Colonic mucosa (tissue), 4 donors: ENCODE measurements at regions of chr1 and their contacts with region 1.

Region 1: DNA sequence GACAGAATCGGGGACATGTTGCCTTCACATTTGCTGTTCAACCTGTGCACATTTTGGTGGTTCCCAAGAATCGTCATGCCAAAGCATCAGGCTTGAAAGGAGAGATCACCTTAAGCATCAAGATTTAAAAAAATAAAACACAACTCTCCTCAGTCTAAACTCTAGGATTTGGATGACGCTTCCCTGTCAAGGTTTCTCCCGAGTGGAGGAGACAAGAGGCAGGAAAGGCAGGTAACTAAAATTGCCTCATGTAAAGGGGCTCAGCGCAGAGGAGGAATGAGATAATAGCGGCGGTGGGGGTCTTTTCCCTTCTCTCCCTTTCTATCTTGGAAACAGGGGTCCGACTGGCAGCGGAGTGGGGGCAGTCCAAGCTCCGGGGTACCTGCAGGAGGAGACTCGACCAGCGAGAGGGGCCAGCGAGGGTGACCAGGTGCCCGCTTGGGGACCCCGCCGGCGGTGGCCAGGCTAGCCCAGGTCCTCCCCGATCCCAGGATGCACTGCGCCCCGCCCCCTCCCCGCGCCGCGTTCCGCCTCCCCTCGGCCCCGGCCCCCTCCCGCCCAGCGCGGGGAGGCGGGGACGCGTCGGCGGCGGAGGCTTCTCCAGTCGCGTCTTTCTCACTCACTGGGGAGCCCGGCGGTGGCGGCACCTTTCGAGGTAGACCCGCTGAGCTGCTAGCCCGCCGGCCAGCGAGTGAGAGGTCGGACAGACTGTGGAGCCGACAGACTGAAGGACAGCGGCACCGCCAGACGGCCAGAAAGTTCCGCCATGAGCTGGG is at the start of gene FNBP1L:
- DNase-seq: peak; percentile 87
- H3K4me3 ChIP-seq: peak within 1 kb of the TSS; percentile 66
- H3K27ac ChIP-seq: peak within 1 kb of the TSS; percentile 87
- H3K4me1 ChIP-seq: no peaks in the 10 kb centered on the region
- H3K27me3 ChIP-seq: no peaks in the 10 kb centered on the region
- CTCF ChIP-seq: no peak
- total RNA-seq, gene FNBP1L: 48.3 to 54.4 TPM

Region 2: DNA sequence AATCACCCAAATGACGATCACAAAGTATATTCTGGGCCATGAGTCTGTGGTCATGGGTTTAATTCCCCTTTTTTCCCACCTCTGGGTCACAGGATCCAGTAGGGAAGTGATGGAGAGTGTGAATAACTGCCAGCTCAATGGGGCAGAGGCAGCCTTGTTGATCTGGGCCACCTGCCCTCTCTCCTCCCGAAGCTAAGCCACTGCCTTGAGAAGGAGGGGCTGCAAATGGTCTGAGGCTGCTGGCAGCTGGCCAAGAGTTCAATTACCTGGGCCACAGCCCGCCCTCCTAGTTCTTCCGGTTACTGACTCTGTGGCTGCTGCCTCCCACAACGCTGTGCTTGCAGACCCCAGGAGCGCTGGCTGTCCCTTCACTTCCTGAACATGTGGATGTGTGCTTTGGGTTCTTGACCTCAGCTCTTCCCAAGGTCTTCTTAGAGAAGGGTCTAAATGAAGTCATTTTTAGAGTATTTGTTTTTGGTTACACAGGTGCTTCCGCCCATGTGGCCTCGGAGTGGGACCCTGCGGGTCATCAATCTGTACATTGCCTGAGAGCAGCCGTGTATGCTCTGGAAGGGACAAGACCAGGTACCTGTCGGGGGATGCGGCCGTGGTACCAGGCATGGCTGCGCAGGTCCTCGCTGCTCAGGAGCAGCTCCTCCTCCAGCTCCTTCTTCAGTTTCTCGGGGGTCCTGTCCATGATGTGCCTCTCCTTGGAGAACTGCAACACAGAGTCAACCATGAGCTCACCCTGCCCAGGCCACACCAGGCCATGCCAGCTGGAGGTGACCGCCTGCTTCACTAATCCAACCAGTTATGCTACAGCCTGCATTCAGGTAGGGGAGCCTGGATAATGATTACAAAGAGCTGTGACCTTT is 144.2 kb after region 1 on chr1:
- intact Hi-C with region 1: no loop called
- DNase-seq: peak; percentile 94
- H3K4me3 ChIP-seq: peak overlapping the region; percentile 33
- H3K27ac ChIP-seq: peak overlapping the region; percentile 92
- H3K4me1 ChIP-seq: no peaks in the 10 kb centered on the region
- H3K27me3 ChIP-seq: no peaks in the 10 kb centered on the region
- CTCF ChIP-seq: no peak

Region 3: GRCh38 chr1:93615582-93616150 is 168.0 kb after region 1 on chr1:
- intact Hi-C with region 1: no loop called
- DNase-seq: peak; percentile 38
- H3K4me3 ChIP-seq: no peak overlapping the region
- H3K27ac ChIP-seq: peak overlapping the region; percentile 42
- H3K4me1 ChIP-seq: peaks cover 13% of the 10 kb centered on the region
- H3K27me3 ChIP-seq: no peaks in the 10 kb centered on the region
- CTCF ChIP-seq: no peak

Region 4: GRCh38 chr1:93846211-93846991 is 398.7 kb after region 1 on chr1:
- intact Hi-C with region 1: loop called (anchors 5 kb)
- DNase-seq: peak; percentile 90
- H3K4me3 ChIP-seq: peak overlapping the region; percentile 81
- H3K27ac ChIP-seq: peak overlapping the region; percentile 98
- H3K4me1 ChIP-seq: peaks cover 14% of the 10 kb centered on the region
- H3K27me3 ChIP-seq: no peaks in the 10 kb centered on the region
- CTCF ChIP-seq: peak; percentile 24